Psoas muscle (tissue), 8 donors: ENCODE measurements at regions of chr10 and their contacts with region 1.

Region 1: DNA sequence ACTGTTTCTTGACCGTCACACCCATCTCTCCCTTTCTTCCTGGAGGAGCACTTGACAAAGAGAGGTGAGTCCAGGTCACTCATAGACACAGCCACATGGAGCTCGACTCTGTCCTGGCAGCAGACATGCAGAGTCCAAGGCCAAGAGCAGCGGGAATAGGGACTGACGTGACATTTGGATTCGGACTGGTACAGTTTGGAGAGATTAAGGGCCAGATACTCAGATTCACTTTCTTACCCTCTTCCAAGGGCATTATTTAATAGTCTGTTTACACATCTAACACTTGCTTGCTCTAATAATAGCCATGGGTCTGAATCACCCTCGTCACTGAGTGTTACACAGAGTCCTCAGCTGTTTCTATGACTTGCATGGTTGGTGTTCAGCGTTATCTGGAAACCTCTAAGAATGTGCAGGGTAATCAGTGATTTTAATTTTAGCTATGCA is 39.2 kb upstream of the OTUD1 start:
- DNase-seq: peak; percentile 63 to 85
- ATAC-seq: peak; percentile 94 to 97 (median 95)
- H3K4me3 ChIP-seq: peak overlapping the region; percentile 8
- H3K27ac ChIP-seq: peak overlapping the region; percentile 95
- H3K4me1 ChIP-seq: peaks cover 42% of the 10 kb centered on the region
- H3K27me3 ChIP-seq: no peaks in the 10 kb centered on the region
- CTCF ChIP-seq: no peak

Region 2: GRCh38 chr10:23171223-23171876 is 228.4 kb before region 1 on chr10:
- intact Hi-C with region 1: no loop called
- DNase-seq: no peak
- ATAC-seq: no peak
- H3K4me3 ChIP-seq: no peak overlapping the region
- H3K27ac ChIP-seq: no peak overlapping the region
- H3K4me1 ChIP-seq: no peaks in the 10 kb centered on the region
- H3K27me3 ChIP-seq: peaks cover 2 to 84% (median 23%) of the 10 kb centered on the region in 3 donors
- CTCF ChIP-seq: no peak

Region 3: DNA sequence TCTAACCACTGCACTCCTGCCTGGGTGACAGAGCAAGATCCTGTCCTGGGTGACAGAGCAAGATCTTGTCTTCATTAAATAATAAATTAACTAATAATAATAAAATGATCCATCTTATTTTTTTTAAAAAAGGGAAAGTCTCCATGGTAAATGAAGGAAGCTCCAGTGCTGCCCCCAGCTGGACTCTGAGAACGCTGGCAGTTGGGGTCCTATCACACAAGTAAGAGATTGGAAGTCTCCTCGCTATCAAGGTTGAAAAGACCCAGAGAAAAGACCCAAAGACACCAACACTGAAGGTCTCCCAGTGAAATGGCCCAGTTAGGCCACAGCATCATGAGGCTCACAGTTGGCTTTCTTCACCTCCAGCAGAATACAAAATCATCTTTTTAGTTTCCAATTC is 41.4 kb before region 1 on chr10:
- intact Hi-C with region 1: loop called in 1 of 2 experiments (anchors 5 kb)
- DNase-seq: no peak
- ATAC-seq: no peak
- H3K4me3 ChIP-seq: no peak overlapping the region
- H3K27ac ChIP-seq: no peak overlapping the region
- H3K4me1 ChIP-seq: no peaks in the 10 kb centered on the region
- H3K27me3 ChIP-seq: no peaks in the 10 kb centered on the region
- CTCF ChIP-seq: no peak

Region 4: DNA sequence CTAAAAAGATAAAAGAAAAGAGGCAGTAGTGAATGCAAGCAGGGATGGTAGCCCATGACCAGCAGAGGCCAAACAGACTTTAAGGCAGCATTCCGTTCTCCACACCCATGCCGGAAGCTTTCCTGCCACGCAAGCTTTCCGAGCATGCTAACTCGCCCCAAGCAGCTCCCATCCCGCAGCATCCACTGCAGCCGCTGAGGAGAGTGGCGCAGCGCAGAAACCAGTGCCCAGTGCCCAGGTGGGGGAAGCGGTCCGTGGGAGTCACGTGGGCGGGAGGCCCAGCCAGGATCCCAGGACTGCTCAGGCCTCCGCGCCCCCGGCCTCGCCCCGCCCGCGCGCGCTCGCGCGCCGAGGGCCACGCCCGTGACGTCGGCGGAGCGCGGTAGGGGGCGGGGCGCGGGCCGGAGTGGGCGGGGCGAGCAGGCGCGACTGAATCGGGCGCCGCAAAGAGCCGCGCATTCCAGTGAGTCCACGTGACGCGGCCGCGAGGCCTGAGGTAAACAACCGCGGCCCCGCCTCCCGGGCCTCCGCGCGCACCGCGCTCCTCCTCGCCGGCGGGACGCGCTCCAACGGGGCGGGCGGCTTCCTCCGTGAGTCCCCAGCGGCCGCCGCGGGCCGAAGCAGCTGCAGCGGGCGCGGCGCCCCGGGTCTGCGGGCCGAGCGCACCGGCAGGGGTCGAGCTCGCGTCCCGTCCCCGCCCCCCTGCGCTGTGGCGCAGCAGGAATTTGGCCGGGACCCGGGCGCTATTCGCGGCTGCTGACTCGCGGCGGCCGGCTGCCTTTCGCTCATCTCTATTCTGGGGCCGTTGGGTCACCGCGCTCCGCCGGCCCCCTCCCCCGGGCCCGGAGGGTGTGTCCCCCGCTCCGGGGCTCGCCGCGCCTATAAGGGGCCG is 39.1 kb after region 1 on chr10 and contains the start of gene OTUD1:
- intact Hi-C with region 1: loop called (anchors 5 kb)
- DNase-seq: peak; percentile 97 to 98
- ATAC-seq: peak; percentile 83 to 92 (median 88)
- H3K4me3 ChIP-seq: peak within 1 kb of the TSS; percentile 95
- H3K27ac ChIP-seq: peak within 1 kb of the TSS; percentile 97
- H3K4me1 ChIP-seq: peaks cover 17% of the 10 kb centered on the region
- H3K27me3 ChIP-seq: no peaks in the 10 kb centered on the region
- CTCF ChIP-seq: peak; percentile 11
- total RNA-seq, gene OTUD1: 19.7 to 165 (median 95.0) TPM

Region 5: GRCh38 chr10:23525406-23525805 is 125.7 kb after region 1 on chr10:
- intact Hi-C with region 1: no loop called
- DNase-seq: no peak
- ATAC-seq: peak; percentile 80 to 90 (median 85)
- H3K4me3 ChIP-seq: no peak overlapping the region
- H3K27ac ChIP-seq: no peak overlapping the region
- H3K4me1 ChIP-seq: no peaks in the 10 kb centered on the region
- H3K27me3 ChIP-seq: no peaks in the 10 kb centered on the region
- CTCF ChIP-seq: peak; percentile 67

Region 6: GRCh38 chr10:23768270-23768669 is 368.5 kb after region 1 on chr10:
- intact Hi-C with region 1: no loop called
- DNase-seq: no peak
- ATAC-seq: no peak
- H3K4me3 ChIP-seq: no peak overlapping the region
- H3K27ac ChIP-seq: no peak overlapping the region
- H3K4me1 ChIP-seq: no peaks in the 10 kb centered on the region
- H3K27me3 ChIP-seq: no peaks in the 10 kb centered on the region
- CTCF ChIP-seq: no peak